Natural killer cell (primary cell): ENCODE measurements at regions of chr2 and their contacts with region 1.

Region 1: GRCh38 chr2:144596073-144596871 is 76.4 kb upstream of the ZEB2 start:
- DNase-seq: peak in 1 of 2 donors; percentile 41
- ATAC-seq: peak; percentile 53 to 70 (median 55)
- H3K4me3 ChIP-seq: no peak overlapping the region
- H3K4me3 Mint-ChIP-seq: peak overlapping the region; percentile 72
- H3K27ac ChIP-seq: peak overlapping the region; percentile 95
- H3K27ac Mint-ChIP-seq: peak overlapping the region; percentile 93 to 95
- H3K4me1 ChIP-seq: peaks cover 27% of the 10 kb centered on the region
- H3K4me1 Mint-ChIP-seq: peaks cover 59 to 61% of the 10 kb centered on the region in 2 donors
- H3K27me3 ChIP-seq: no peaks in the 10 kb centered on the region
- H3K27me3 Mint-ChIP-seq: no peaks in the 10 kb centered on the region
- CTCF ChIP-seq: no peak

Region 2: DNA sequence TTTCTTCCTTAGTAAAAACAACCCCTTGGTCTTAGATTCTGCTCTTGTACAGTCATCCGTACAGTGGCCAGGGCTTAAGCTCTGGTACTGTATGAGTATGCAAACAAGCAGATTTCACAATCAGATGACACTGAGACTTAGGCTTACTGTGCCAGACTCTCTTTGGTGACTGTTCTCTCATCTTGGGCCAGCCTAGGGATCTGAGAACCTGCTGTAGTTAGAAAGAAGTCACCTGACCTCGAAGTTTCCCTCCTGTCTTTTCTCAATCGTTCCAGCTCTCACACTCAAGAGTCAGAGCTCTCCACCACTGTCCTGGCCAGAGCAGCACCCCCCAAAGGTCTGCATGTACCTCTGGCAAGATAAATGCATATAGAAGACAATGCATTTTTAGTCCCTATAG is 139.6 kb before region 1 on chr2:
- intact Hi-C with region 1: loop called (anchors 5 kb)
- DNase-seq: peak; percentile 45 to 63
- ATAC-seq: peak; percentile 54 to 73 (median 55)
- H3K4me3 ChIP-seq: no peak overlapping the region
- H3K4me3 Mint-ChIP-seq: peak overlapping the region; percentile 47
- H3K27ac ChIP-seq: peak overlapping the region; percentile 99
- H3K27ac Mint-ChIP-seq: peak overlapping the region in 1 of 2 donors; percentile 86
- H3K4me1 ChIP-seq: peaks cover 46% of the 10 kb centered on the region
- H3K4me1 Mint-ChIP-seq: peaks cover 93 to 96% of the 10 kb centered on the region in 2 donors
- H3K27me3 ChIP-seq: no peaks in the 10 kb centered on the region
- H3K27me3 Mint-ChIP-seq: no peaks in the 10 kb centered on the region
- CTCF ChIP-seq: no peak

Region 3: GRCh38 chr2:144493027-144493809 is 103.1 kb before region 1 on chr2:
- intact Hi-C with region 1: no loop called
- DNase-seq: no peak
- ATAC-seq: no peak
- H3K4me3 ChIP-seq: no peak overlapping the region
- H3K4me3 Mint-ChIP-seq: peak overlapping the region; percentile 73
- H3K27ac ChIP-seq: peak overlapping the region; percentile 47
- H3K27ac Mint-ChIP-seq: peak overlapping the region; percentile 58 to 89
- H3K4me1 ChIP-seq: peaks cover 38% of the 10 kb centered on the region
- H3K4me1 Mint-ChIP-seq: peaks cover 87 to 91% of the 10 kb centered on the region in 2 donors
- H3K27me3 ChIP-seq: no peaks in the 10 kb centered on the region
- H3K27me3 Mint-ChIP-seq: no peaks in the 10 kb centered on the region
- CTCF ChIP-seq: no peak

Region 4: DNA sequence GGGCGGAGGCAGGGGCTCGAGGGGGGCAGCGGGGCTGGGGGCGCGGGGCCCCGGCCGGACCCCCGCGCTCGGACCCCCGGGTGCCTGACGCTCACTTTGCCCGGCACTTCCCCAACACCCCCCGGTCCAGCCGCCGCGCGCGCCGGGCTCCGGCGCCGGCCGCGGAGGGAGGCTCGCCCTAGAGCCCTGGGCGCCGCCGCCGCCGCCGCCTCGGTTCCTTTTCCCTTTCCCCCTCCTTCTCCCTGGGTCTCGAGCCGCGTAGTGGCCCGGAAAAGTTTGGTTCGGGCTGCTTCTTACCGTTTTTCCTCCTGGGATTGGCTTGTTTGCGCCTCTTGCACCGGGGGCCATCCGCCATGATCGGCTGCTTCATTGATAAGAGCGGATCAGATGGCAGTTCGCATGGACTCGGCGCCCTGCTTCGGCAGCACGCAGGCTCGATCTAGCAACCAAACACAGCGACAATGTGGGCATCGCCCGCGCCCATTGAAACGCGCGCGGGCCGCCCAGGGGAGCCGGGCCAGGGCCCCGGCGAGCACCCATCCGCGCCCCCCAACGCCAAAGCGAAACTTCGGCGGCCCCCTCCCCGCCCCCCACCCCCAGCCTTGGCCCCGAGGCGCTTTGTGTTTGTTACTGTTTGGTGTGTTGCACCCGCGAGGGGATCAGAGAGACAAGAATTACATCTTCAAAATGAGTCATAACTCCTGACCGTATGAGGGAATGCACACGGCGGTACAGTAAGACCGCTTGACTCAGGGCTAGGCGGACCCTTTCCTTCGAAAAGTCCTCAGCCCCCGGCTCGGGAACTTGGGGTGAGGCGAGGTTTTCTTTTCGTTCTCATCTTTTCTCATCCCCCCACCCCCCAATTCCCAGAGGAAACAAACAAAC is 79.0 kb before region 1 on chr2:
- intact Hi-C with region 1: loop called (anchors 2 kb)
- DNase-seq: peak; percentile 67 to 80
- ATAC-seq: peak; percentile 54 to 75 (median 68)
- H3K4me3 ChIP-seq: peak overlapping the region; percentile 85
- H3K4me3 Mint-ChIP-seq: no peak overlapping the region
- H3K27ac ChIP-seq: peak overlapping the region; percentile 99
- H3K27ac Mint-ChIP-seq: no peak overlapping the region
- H3K4me1 ChIP-seq: peaks cover 28% of the 10 kb centered on the region
- H3K4me1 Mint-ChIP-seq: peaks cover 39% of the 10 kb centered on the region in 2 donors
- H3K27me3 ChIP-seq: no peaks in the 10 kb centered on the region
- H3K27me3 Mint-ChIP-seq: peaks cover 0 to 5% of the 10 kb centered on the region in 2 donors
- CTCF ChIP-seq: no peak

Region 5: DNA sequence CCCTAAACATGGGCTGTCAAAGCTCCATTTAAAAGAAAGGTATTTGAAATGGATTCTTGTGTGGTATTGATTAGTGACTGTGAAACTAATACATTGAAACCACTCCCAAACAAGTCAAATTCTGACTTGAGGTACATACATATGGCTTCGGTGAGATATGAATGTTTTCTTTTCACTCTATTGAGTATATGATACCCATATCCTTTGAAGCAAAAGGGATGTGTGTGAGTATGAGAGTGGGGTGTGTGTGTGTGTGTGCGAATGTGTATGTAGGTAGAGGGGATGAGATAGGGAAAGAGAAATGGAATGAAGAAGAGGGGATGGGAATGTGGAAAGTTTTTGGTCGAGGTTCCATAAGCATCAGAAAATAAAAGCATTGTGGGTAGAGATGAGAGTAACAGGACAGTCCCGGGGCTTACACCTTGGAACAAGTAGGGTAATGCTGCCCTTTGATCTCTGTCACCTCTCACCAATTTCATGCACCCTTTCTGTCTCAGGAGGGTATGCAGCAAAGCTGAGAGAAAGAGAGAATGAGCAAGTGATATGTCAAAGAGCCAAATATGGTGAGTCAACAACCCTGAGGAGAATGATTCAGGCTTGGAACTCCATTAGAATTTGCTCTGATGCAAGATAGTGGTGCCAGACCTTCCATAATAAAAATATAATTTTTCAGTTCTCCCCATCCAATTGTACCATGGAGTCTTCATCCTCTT is 12.4 kb before region 1 on chr2:
- intact Hi-C with region 1: loop called (anchors 2 kb)
- DNase-seq: peak in 1 of 2 donors; percentile 3
- ATAC-seq: peak in 1 of 3 donors; percentile 24
- H3K4me3 ChIP-seq: no peak overlapping the region
- H3K4me3 Mint-ChIP-seq: peak overlapping the region; percentile 79
- H3K27ac ChIP-seq: peak overlapping the region; percentile 42
- H3K27ac Mint-ChIP-seq: peak overlapping the region; percentile 50 to 74
- H3K4me1 ChIP-seq: peaks cover 32% of the 10 kb centered on the region
- H3K4me1 Mint-ChIP-seq: peaks cover 52% of the 10 kb centered on the region in 2 donors
- H3K27me3 ChIP-seq: no peaks in the 10 kb centered on the region
- H3K27me3 Mint-ChIP-seq: no peaks in the 10 kb centered on the region
- CTCF ChIP-seq: no peak

Region 6: GRCh38 chr2:144659731-144660275 is 63.5 kb after region 1 on chr2:
- intact Hi-C with region 1: loop called (anchors 1 kb)
- DNase-seq: peak; percentile 82 to 84
- ATAC-seq: peak; percentile 85 to 96 (median 93)
- H3K4me3 ChIP-seq: no peak overlapping the region
- H3K4me3 Mint-ChIP-seq: peak overlapping the region; percentile 66
- H3K27ac ChIP-seq: peak overlapping the region; percentile 96
- H3K27ac Mint-ChIP-seq: peak overlapping the region; percentile 89 to 94
- H3K4me1 ChIP-seq: peaks cover 24% of the 10 kb centered on the region
- H3K4me1 Mint-ChIP-seq: peaks cover 40 to 48% of the 10 kb centered on the region in 2 donors
- H3K27me3 ChIP-seq: no peaks in the 10 kb centered on the region
- H3K27me3 Mint-ChIP-seq: no peaks in the 10 kb centered on the region
- CTCF ChIP-seq: no peak

Region 7: DNA sequence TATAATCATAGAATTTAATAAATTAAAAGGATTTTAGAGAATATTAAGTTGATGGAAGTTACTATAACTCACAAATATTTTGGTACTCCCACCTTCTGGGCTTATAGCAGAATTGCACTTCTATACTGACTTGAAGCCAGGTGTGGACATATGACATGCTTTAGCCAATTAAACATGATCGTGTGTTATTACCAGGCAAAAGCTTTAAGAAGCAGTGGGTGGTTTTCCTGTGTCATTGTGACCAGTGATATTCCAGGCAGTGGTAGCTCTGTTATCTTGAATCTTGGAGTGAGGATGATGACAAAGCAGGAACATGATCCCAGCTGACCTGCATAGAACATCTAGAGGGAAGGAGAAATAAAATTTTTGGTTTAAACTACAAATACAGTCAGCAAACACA is 294.6 kb after region 1 on chr2:
- intact Hi-C with region 1: no loop called
- DNase-seq: peak in 1 of 2 donors; percentile 23
- ATAC-seq: peak; percentile 75 to 94 (median 93)
- H3K4me3 ChIP-seq: no peak overlapping the region
- H3K4me3 Mint-ChIP-seq: no peak overlapping the region
- H3K27ac ChIP-seq: no peak overlapping the region
- H3K27ac Mint-ChIP-seq: no peak overlapping the region
- H3K4me1 ChIP-seq: no peaks in the 10 kb centered on the region
- H3K4me1 Mint-ChIP-seq: peaks cover 0 to 6% of the 10 kb centered on the region in 2 donors
- H3K27me3 ChIP-seq: no peaks in the 10 kb centered on the region
- H3K27me3 Mint-ChIP-seq: no peaks in the 10 kb centered on the region
- CTCF ChIP-seq: no peak